SK-N-SH (cell line): ENCODE measurements at regions of chr11 and their contacts with region 1.

Region 1: GRCh38 chr11:134223836-134224709 is at the starts of genes NCAPD3 and VPS26B:
- DNase-seq: peak; percentile 99
- H3K4me3 ChIP-seq: peak within 1 kb of the TSS; percentile 79 to 94
- H3K27ac ChIP-seq: peak within 1 kb of the TSS; percentile 85 to 95
- H3K4me1 ChIP-seq: peaks cover 6 to 32% of the 10 kb centered on the region in 2 experiments; a peak in 3 of 4 replicates
- H3K27me3 ChIP-seq: no peaks in the 10 kb centered on the region
- CTCF ChIP-seq: no peak
- EP300 ChIP-seq: peak in 1 of 2 experiments; percentile 5; a peak in 1 of 4 replicates
- RAD21 ChIP-seq: no peak
- polyA plus RNA-seq, gene NCAPD3: 19.5 and 22.0 TPM in 2 replicates
- polyA plus RNA-seq, gene VPS26B: 53.0 and 56.0 TPM in 2 replicates

Region 2: GRCh38 chr11:134244655-134245054 is 20.6 kb after region 1 on chr11:
- CTCF ChIA-PET with region 1: interaction called, 13 read pairs
- POLR2A ChIA-PET with region 1: no interaction called
- DNase-seq: peak; percentile 59
- H3K4me3 ChIP-seq: no peak overlapping the region
- H3K27ac ChIP-seq: no peak overlapping the region
- H3K4me1 ChIP-seq: no peaks in the 10 kb centered on the region; a peak in 1 of 4 replicates
- H3K27me3 ChIP-seq: no peaks in the 10 kb centered on the region
- CTCF ChIP-seq: peak; percentile 58
- EP300 ChIP-seq: no peak
- RAD21 ChIP-seq: peak; percentile 67